Psoas muscle (tissue), 8 donors: ENCODE measurements at regions of chr4 and their contacts with region 1.

Region 1: DNA sequence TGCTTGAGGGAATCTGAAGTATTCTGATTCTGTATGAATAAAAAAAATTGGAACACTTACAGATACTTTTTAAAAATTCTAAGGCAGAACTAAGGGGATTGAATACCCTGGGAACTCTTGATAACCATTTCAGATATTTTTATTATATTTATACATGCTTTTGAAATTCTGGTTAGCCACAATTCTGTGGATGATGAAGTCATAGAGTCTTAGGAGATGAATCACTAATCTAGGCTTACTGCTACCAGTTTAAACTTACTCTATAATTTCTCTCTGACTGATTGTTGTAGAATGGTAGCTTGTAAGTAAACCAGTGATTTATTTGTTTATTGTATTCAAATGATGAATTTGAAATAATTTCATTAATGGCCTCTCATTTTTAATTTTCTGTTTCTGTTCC is 11.4 kb upstream of the SLAIN2 start:
- DNase-seq: no peak
- ATAC-seq: peak in 2 of 4 donors; percentile 39 to 62
- H3K4me3 ChIP-seq: no peak overlapping the region
- H3K27ac ChIP-seq: peak overlapping the region; percentile 98
- H3K4me1 ChIP-seq: peaks cover 50% of the 10 kb centered on the region
- H3K27me3 ChIP-seq: no peaks in the 10 kb centered on the region
- CTCF ChIP-seq: no peak

Region 2: DNA sequence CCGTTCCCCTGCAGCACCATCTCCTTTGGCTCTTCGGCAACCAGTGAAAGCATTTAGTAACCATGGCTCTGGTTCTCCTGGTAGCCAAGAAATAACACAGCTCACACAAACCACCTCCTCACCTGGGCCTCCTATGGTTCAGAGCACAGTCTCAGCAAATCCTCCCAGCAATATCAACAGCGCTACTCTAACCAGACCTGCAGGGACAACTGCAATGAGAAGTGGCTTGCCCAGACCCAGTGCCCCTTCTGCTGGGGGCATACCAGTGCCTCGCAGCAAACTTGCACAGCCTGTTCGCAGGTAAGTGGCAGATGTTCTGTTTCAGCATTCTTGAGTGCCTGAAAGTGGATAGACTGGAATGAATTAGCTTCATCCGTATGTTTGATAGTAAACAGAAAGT is 90.2 kb after region 1 on chr4:
- intact Hi-C with region 1: no loop called
- DNase-seq: no peak
- ATAC-seq: no peak
- H3K4me3 ChIP-seq: no peak overlapping the region
- H3K27ac ChIP-seq: no peak overlapping the region
- H3K4me1 ChIP-seq: no peaks in the 10 kb centered on the region
- H3K27me3 ChIP-seq: no peaks in the 10 kb centered on the region
- CTCF ChIP-seq: no peak

Region 3: DNA sequence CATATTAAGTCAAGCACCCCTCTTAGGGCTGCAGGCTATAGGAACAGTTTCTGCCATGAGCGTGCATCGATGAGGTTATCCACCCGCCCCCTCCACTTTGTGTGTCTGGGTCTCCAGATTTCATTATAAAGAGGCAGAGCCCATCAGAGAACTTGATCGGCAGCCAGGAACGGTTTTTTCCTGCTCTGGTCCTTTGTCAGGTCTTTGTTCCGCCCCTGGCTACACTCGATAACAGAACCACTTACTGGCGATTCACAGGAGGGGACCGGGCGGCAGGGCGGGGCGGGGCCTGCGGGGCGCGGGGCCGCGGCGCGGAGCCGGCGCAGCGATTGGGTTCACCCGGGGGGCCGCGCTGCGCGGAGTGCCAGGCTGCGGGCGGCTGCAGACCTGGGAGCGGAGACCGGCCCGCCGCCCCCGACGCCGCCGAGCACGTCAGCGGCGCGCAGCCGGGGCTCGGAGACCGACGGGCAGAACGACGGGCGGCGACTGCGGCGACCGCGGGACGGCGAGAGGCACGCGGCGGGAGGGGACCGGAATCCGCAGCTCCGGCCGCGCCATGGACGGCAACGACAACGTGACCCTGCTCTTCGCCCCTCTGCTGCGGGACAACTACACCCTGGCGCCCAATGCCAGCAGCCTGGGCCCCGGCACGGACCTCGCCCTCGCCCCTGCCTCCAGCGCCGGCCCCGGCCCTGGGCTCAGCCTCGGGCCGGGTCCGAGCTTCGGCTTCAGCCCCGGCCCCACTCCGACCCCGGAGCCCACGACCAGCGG is 153.2 kb after region 1 on chr4 and contains the start of gene SLC10A4:
- intact Hi-C with region 1: loop called in 1 of 2 experiments (anchors 10 kb)
- DNase-seq: peak in 1 of 2 donors; percentile 18
- ATAC-seq: peak in 1 of 4 donors; percentile 19
- H3K4me3 ChIP-seq: peak within 1 kb of the TSS; percentile 54
- H3K27ac ChIP-seq: no peak within 1 kb of the TSS
- H3K4me1 ChIP-seq: no peaks in the 10 kb centered on the region
- H3K27me3 ChIP-seq: peaks cover 0 to 64% (median 24%) of the 10 kb centered on the region in 3 donors
- CTCF ChIP-seq: no peak
- total RNA-seq, gene SLC10A4: 0.11 to 0.22 (median 0.12) TPM in 3 of 4 donors, not detected in the other